Esophagus squamous epithelium (tissue), 5 donors: ENCODE measurements at regions of chr20 and their contacts with region 1.

Region 1: DNA sequence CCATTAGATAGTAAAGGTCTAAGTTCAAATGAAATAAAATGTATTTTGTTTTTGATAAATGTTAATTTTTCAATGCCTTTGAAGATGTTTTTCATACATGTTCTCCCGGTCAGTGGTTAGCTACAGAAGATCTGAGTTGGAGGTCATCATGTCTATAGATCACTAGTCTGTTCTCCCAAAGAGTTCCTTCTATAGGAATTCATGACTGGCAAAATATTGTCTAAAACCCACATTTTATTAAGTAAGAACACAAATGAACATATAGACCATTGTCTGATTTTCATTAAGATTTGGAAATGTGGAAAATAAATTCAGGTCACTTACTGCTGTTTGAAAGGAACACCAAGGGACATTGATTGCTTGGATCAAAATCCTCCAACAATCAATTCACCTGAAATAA is 23.6 kb downstream of the HAO1 start:
- DNase-seq: no peak
- H3K4me3 ChIP-seq: no peak overlapping the region
- H3K27ac ChIP-seq: no peak overlapping the region
- H3K4me1 ChIP-seq: no peaks in the 10 kb centered on the region
- H3K27me3 ChIP-seq: no peaks in the 10 kb centered on the region
- CTCF ChIP-seq: no peak
- POLR2A ChIP-seq: no peak

Region 2: DNA sequence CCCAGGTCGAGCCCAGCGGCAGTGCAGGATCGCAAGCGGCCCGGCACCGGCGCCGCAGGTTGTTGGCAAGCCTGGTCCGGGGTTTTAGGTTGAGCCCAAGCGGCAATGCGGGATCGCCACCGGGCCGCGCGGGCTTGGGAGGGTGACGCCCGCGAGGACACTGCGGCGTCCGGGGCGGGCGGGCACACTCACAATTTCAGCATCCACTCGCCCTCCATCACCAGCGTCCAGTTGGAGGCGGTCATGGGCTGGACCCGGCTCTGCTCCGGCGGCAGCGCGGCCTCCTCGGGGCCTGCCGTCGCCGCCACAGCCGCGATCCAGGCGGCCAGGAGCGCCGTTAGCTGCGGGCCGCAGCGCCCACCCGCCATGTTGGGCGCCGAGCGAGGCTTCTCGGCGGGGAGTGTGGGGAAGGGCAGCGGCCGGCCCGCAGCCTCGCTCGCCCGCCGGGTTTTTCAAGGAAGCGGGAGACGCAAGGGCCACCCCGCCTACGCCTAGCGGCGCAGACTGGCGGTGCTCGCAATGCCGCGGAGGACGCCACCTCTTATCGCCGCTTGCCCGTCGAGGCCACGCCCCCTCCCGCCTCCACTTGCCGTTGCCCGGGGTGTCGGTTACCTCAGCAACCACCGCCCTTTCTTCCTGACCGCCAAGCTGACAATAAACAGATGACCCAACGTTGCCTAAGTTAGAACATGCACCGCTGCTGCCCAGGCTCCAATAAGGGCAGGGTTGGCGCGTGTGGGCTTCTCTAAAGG is 102.8 kb after region 1 on chr20 and contains the start of gene TMX4:
- intact Hi-C with region 1: no loop called
- DNase-seq: peak; percentile 80
- H3K4me3 ChIP-seq: peak within 1 kb of the TSS; percentile 83 to 91 (median 90)
- H3K27ac ChIP-seq: peak within 1 kb of the TSS; percentile 96 to 99 (median 98)
- H3K4me1 ChIP-seq: peaks cover 0 to 31% (median 3%) of the 10 kb centered on the region in 3 donors
- H3K27me3 ChIP-seq: no peaks in the 10 kb centered on the region
- CTCF ChIP-seq: peak in 5 of 6 experiments; percentile 11 to 80 (median 63)
- POLR2A ChIP-seq: peak in 2 of 4 donors; percentile 94 to 95
- total RNA-seq, gene TMX4: 9.1 to 26.5 (median 12.0) TPM

Region 3: DNA sequence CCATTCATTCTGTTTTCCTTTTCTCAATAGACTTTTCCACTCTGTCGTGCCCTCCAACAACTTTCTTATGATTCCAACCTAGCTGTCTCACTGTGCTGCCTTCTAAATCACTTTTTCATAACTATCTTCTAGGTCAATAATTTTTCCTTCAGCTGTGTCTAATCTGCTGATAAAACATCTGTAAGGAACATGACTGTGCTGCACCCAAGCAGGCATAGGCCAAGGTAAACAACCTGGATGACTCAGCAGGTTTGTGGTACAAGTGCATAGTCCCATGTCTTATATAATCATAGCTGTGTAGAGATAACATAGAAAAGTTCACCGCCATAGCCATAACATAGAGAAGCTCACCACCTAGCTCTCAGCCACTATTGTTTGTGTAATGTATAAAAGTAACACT is 547.7 kb after region 1 on chr20:
- intact Hi-C with region 1: no loop called
- DNase-seq: no peak
- H3K4me3 ChIP-seq: no peak overlapping the region
- H3K27ac ChIP-seq: no peak overlapping the region
- H3K4me1 ChIP-seq: no peaks in the 10 kb centered on the region
- H3K27me3 ChIP-seq: no peaks in the 10 kb centered on the region
- CTCF ChIP-seq: no peak
- POLR2A ChIP-seq: no peak

Region 4: GRCh38 chr20:8709627-8710026 is 793.0 kb after region 1 on chr20:
- intact Hi-C with region 1: loop called (anchors 5 kb)
- DNase-seq: no peak
- H3K4me3 ChIP-seq: no peak overlapping the region
- H3K27ac ChIP-seq: no peak overlapping the region
- H3K4me1 ChIP-seq: no peaks in the 10 kb centered on the region
- H3K27me3 ChIP-seq: no peaks in the 10 kb centered on the region
- CTCF ChIP-seq: no peak
- POLR2A ChIP-seq: no peak